Calu3 (cell line): ENCODE measurements at regions of chr2 and their contacts with region 1.

Region 1: DNA sequence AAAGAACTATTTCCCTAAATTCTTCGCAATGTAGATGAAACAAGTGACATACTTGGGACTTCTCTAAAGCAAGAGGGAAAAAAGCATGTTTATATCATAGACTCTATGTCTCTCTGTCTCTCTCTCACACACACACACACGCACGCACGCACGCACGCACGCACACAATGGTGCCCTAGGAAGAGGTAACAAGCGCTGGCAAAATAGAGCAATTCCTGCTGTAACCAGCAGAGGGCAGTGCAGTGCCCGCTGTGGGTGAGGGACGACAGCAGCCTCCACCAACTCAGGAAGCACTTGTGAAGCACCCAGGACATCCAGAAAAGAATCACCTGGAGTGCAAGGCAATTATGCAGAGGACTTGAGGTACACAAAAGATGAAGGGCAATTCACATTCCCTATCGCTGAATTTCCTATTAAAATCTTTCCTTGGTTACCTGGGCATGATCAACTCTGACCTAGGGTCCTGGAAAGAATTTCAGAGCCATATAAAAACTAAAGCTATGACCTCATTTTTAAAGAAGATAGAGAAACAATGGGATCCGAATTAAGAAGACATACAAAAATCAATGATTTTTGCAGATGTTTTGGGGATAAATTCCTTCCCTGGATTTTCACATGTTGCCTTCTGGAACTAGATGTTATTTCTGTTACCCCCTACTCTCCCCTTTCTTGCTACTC is 166.4 kb downstream of the PDE11A start:
- DNase-seq: peak; percentile 85
- H3K4me3 Mint-ChIP-seq: no peak overlapping the region
- H3K27ac Mint-ChIP-seq: no peak overlapping the region
- H3K4me1 Mint-ChIP-seq: peaks cover 24% of the 10 kb centered on the region
- H3K27me3 Mint-ChIP-seq: no peaks in the 10 kb centered on the region
- CTCF ChIP-seq: peak; percentile 84

Region 2: GRCh38 chr2:177783835-177784744 is 122.1 kb before region 1 on chr2:
- CTCF ChIA-PET with region 1: no interaction called
- intact Hi-C with region 1: loop called (anchors 5 kb)
- DNase-seq: peak; percentile 31
- H3K4me3 Mint-ChIP-seq: peak overlapping the region; percentile 47
- H3K27ac Mint-ChIP-seq: peak overlapping the region; percentile 32
- H3K4me1 Mint-ChIP-seq: peaks cover 34% of the 10 kb centered on the region
- H3K27me3 Mint-ChIP-seq: no peaks in the 10 kb centered on the region
- CTCF ChIP-seq: no peak

Region 3: DNA sequence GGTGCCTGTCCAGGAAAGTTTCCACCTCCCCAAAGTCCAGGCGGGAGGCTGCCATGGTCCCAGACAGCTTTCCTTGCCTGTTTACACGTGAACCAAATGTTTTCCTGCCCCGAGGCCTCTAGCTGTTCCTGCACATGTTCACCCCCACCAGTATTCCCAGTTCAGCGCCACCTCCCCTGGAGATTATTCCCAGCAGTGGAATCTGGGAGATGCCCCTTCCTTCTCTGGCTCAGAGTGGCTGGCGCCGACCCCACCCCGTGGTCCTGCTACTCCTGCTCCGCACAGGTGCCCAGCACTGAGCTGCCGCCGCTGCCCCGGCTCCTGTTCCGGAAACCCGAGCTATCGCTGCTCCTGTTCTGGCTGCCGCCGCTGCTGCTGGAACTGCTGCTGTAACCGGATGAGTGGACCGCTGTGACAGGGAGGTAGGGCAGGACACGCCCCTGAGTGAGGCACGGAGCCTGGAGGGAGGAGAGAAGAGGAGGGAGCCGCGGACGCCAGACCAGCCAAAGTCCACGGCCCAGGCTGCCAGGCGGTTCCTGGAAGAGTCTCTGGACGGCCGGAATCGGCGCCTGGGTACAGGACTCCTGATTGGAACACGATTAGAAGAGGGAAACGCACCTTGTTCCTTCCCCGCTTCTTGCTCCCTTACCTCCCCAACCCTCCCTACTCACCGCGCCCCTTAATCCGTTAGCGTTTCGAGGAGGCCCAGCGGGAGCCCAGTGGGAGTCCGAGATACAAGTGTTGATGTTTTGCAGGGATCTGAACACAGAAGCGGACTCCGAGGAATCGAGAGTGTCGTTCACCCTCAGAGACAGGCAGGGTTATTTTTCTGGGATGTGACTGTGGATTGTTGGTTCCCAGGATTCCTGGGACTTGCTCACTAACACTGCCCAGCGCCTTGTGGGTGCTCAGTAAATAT is 166.5 kb after region 1 on chr2 and contains the start of gene PDE11A:
- CTCF ChIA-PET with region 1: no interaction called
- intact Hi-C with region 1: loop called (anchors 5 kb)
- DNase-seq: peak; percentile 90
- H3K4me3 Mint-ChIP-seq: peak within 1 kb of the TSS; percentile 83
- H3K27ac Mint-ChIP-seq: peak within 1 kb of the TSS; percentile 45
- H3K4me1 Mint-ChIP-seq: peaks cover 48% of the 10 kb centered on the region
- H3K27me3 Mint-ChIP-seq: no peaks in the 10 kb centered on the region
- CTCF ChIP-seq: no peak
- total RNA-seq, gene PDE11A: 1.4 and 2.1 TPM in 2 replicates